HEK293 (cell line): ENCODE measurements at regions of chr6 and their contacts with region 1.

Region 1: GRCh38 chr6:7238900-7239589 is 74.0 kb downstream of the SSR1 start:
- H3K4me3 ChIP-seq: no peak overlapping the region
- H3K27ac ChIP-seq: no peak overlapping the region
- H3K4me1 ChIP-seq: peaks cover 3% of the 10 kb centered on the region; the same call in 1 of the 2 replicates
- CTCF ChIP-seq: no peak

Region 2: DNA sequence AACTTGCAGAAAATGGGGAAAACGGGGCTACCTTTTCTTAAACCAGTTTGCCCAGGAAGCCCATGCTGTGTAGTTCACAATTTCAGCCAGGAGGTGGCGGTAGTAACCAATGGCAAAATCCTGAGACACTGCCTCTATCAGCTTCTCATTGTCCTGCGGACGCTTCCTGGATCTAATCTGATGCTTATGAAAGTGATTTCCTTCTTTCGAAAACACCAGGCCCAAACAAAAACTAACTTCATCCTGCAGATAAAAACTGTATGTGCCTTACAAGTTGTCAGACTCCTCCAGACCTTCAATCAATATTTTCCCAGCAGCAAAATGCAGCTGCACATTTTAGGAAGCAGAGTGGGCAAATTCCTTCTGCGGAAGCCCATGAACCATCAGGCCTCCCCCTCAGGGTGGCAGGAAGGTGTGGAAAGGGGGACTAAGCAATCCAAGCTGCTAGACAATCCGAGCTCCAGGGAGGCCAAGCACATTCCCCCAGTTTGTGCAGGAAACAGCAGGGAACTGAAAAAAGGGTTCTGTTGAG is 562.1 kb before region 1 on chr6:
- CTCF ChIA-PET with region 1: interaction called, 19 read pairs
- POLR2A ChIA-PET with region 1: no interaction called
- H3K4me3 ChIP-seq: no peak overlapping the region
- H3K27ac ChIP-seq: no peak overlapping the region
- H3K4me1 ChIP-seq: peaks cover 8% of the 10 kb centered on the region
- CTCF ChIP-seq: peak; percentile 72

Region 3: DNA sequence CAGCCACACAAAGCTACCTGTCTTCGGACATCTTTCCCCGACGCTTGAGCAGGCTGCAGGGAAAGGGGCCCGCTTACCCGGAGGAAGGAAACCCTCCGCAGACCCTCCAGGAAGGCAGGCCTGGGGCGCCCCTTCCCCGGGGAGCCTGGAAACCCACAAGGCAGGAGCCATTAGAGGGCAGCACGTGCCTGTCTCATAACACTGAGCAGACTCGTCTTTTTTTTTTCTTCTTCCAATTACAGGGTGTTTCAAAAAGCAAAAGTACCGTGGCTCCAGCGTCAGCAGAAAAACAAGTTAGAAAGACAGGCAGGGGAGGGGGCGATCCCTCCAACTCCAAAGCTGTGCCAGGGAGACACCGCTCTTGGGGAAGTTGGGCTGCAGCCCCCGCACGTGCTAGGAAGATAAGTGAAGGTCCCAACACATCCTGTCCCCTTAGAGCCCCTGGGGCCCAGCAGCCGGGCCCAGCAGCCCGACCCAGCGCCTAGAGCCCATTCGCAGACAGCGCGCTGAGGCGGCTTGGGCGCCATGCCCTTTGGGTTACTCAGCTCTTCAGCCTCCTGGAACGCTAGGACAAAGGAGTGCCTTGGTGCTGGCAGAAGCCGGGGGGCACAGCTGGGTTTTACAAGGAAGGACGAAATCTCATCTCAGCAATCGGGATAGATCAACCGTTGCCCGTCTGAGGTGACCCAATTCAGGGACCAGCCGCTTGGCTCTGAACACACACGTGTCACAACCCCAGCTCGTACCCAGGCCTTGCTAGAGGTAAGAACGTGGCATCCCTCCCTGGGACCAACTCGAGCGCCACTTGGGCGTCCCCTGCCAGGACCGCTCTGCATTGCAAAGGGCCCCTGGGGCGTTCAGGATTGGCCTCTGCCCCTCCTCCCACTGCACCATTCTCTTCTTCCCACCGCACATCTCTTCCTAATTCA is 514.2 kb before region 1 on chr6:
- CTCF ChIA-PET with region 1: interaction called, 65 read pairs
- POLR2A ChIA-PET with region 1: no interaction called
- H3K4me3 ChIP-seq: no peak overlapping the region
- H3K27ac ChIP-seq: no peak overlapping the region
- H3K4me1 ChIP-seq: no peaks in the 10 kb centered on the region
- CTCF ChIP-seq: peak; percentile 37; the same call in 1 of the 2 replicates

Region 4: DNA sequence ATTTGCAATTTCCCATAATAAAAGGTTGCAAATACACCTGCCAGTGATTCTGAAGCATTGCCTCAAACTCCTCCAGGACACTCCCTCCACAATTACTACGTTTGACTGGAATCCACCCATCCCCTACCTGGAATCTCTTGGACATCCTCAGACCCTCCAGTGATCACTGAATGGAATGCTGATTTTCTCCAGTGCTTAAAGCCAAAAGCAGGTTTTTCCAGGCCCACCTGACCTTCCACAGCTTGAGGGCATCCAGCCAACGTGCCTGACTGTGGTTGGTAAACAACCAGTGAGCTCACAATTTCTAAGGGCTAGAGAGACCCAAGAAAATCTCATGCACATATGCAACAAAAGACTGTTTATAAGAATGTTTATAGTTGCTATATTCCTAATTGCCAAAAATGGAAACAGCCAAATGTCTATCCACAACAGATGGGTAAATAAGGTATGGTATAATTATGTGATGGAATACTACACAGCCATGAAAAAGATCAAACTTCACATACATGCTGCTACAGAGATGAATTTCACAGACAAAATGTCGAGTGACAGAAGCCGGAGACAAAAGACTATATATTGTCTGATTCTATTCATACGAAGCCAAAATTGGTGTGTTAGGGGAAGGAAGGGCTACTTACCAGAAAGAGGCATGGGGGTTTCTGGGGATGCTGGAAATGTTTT is 278.3 kb before region 1 on chr6:
- CTCF ChIA-PET with region 1: no interaction called
- POLR2A ChIA-PET with region 1: no interaction called
- H3K4me3 ChIP-seq: no peak overlapping the region
- H3K27ac ChIP-seq: no peak overlapping the region
- H3K4me1 ChIP-seq: no peaks in the 10 kb centered on the region
- CTCF ChIP-seq: no peak

Region 5: GRCh38 chr6:7115543-7116231 is 123.4 kb before region 1 on chr6:
- CTCF ChIA-PET with region 1: interaction called, 12 read pairs
- POLR2A ChIA-PET with region 1: no interaction called
- H3K4me3 ChIP-seq: no peak overlapping the region
- H3K27ac ChIP-seq: no peak overlapping the region
- H3K4me1 ChIP-seq: peaks cover 22% of the 10 kb centered on the region
- CTCF ChIP-seq: no peak

Region 6: DNA sequence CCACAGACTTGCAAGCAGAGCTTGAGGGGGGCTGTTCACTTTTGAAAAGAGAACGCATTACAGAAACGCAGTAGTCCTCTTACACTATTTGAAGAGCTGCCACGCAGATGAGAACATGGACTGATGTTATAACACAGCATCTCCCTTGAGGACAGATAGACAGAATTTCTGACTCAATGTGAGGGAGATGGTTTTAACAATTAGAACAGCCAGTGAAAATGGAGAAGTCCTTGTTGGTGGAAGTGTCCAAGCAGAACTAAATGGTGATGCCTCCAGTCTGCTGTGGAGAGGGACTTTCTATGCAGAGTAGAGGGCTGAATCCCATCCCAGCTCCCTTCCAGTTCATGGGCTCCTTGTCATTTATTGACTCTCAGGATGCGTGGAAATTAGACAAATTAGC is 31.3 kb before region 1 on chr6:
- CTCF ChIA-PET with region 1: interaction called, 15 read pairs
- POLR2A ChIA-PET with region 1: no interaction called
- H3K4me3 ChIP-seq: no peak overlapping the region
- H3K27ac ChIP-seq: no peak overlapping the region
- H3K4me1 ChIP-seq: no peaks in the 10 kb centered on the region
- CTCF ChIP-seq: no peak

Region 7: GRCh38 chr6:7254980-7255835 is 16.2 kb after region 1 on chr6:
- CTCF ChIA-PET with region 1: interaction called, 41 read pairs
- POLR2A ChIA-PET with region 1: no interaction called
- H3K4me3 ChIP-seq: no peak overlapping the region
- H3K27ac ChIP-seq: no peak overlapping the region
- H3K4me1 ChIP-seq: no peaks in the 10 kb centered on the region
- CTCF ChIP-seq: no peak